Mammary epithelial cell (primary cell): ENCODE measurements at regions of chr15 and their contacts with region 1.

Region 1: GRCh38 chr15:38589502-38589901 is 24.9 kb upstream of the RASGRP1 start:
- DNase-seq: peak; percentile 88
- H3K4me3 ChIP-seq: no peak overlapping the region
- H3K27ac ChIP-seq: no peak overlapping the region
- H3K4me1 ChIP-seq: peaks cover 6% of the 10 kb centered on the region
- H3K27me3 ChIP-seq: peaks cover 2% of the 10 kb centered on the region
- CTCF ChIP-seq: no peak

Region 2: DNA sequence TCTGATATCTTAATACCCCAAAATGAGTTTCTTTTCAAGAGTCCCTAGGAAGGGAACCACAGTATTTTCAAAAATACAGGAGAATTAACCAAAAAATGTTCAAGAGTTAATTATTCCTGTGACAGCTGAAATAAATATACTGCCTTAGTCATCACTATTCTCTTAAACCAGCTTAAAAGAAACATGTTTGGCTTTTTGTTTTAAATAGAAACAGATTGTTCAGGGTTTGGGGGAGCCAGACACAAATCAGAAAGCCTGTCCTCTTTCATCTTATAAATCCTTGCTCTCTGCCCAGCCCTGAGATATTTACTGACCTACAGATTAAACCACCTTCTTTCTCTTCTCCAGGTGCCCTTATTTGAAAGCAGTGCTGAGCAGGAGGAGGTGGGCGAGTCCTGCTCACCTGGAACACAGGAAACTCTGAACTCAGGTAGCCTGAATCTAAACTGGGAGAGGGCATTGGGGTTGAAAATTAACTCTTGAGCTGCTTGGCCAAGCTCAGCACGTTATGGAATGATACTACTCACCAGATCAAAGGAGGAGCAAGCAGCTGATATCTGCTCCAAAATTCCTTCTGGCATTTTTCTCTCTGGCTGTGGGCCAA is 420.9 kb before region 1 on chr15:
- CTCF ChIA-PET with region 1: no interaction called
- dilution Hi-C with region 1: no loop called
- in situ Hi-C with region 1: no loop called
- intact Hi-C with region 1: no loop called
- DNase-seq: no peak
- H3K4me3 ChIP-seq: no peak overlapping the region
- H3K27ac ChIP-seq: no peak overlapping the region
- H3K4me1 ChIP-seq: no peaks in the 10 kb centered on the region
- H3K27me3 ChIP-seq: peaks cover 5% of the 10 kb centered on the region
- CTCF ChIP-seq: no peak

Region 3: GRCh38 chr15:38226608-38227266 is 362.8 kb before region 1 on chr15:
- CTCF ChIA-PET with region 1: no interaction called
- dilution Hi-C with region 1: no loop called
- in situ Hi-C with region 1: no loop called
- intact Hi-C with region 1: no loop called
- DNase-seq: peak; percentile 96
- H3K4me3 ChIP-seq: no peak overlapping the region
- H3K27ac ChIP-seq: peak overlapping the region; percentile 51
- H3K4me1 ChIP-seq: peaks cover 13% of the 10 kb centered on the region
- H3K27me3 ChIP-seq: no peaks in the 10 kb centered on the region
- CTCF ChIP-seq: no peak

Region 4: GRCh38 chr15:38671675-38672254 is 82.3 kb after region 1 on chr15:
- CTCF ChIA-PET with region 1: no interaction called
- dilution Hi-C with region 1: loop called (anchors 5 kb)
- in situ Hi-C with region 1: no loop called
- intact Hi-C with region 1: no loop called
- DNase-seq: no peak
- H3K4me3 ChIP-seq: no peak overlapping the region
- H3K27ac ChIP-seq: no peak overlapping the region
- H3K4me1 ChIP-seq: no peaks in the 10 kb centered on the region
- H3K27me3 ChIP-seq: no peaks in the 10 kb centered on the region
- CTCF ChIP-seq: no peak